ENCODE measurements at regions of chr7 and their contacts with region 1.

Region 1: GRCh38 chr7:132899833-132900232 is 182.1 kb downstream of the CHCHD3 start:
- DNase-seq: no peak
- H3K4me3 ChIP-seq: no peak overlapping the region
- H3K27ac ChIP-seq: no peak overlapping the region
- H3K4me1 ChIP-seq: no peaks in the 10 kb centered on the region
- H3K27me3 ChIP-seq: no peaks in the 10 kb centered on the region
- CTCF ChIP-seq: no peak
- EP300 ChIP-seq: no peak
- POLR2A ChIP-seq: no peak

Region 2: DNA sequence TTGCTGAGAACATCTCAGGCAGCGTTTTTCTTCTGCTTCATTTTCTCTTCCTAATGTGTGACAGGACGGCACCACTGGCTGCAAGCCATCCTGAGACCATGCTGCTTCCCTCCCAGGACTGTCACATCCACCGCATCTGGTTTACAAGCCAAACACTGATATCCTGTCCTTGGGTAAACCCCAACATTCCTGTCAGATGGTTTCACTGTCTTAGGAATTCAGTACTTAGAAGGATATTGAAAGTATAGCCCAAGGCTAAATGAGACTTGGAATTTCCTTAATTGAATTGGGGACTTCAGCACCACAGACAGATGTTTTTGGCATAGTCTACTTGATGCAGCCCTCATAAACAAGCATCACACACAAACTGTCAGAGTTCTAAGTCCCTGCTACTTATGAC is 249.3 kb before region 1 on chr7:
- intact Hi-C with region 1: no loop called
- DNase-seq: no peak
- H3K4me3 ChIP-seq: no peak overlapping the region
- H3K27ac ChIP-seq: no peak overlapping the region
- H3K4me1 ChIP-seq: no peaks in the 10 kb centered on the region
- H3K27me3 ChIP-seq: no peaks in the 10 kb centered on the region
- CTCF ChIP-seq: no peak
- EP300 ChIP-seq: no peak
- POLR2A ChIP-seq: no peak

Region 3: DNA sequence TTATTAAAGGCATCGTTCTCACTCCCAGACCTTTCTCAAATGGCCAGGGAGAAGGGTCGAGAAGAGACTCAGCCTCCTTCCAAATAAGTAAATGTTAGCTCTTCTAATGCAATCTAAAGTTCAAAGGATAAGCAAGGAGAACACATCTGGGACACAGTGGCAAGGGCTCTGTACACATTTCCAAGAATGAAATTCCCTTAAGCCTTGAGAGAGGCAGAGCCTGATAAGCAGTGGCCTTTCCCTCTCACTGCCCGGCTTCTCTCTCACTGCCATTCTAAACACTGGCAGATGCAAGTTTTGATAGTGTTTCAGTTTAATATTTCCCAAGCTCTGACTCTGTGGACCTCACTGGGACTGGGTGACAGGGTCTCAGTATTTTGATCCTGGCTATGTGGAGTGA is 317.9 kb after region 1 on chr7:
- intact Hi-C with region 1: no loop called
- DNase-seq: no peak
- H3K4me3 ChIP-seq: no peak overlapping the region
- H3K27ac ChIP-seq: no peak overlapping the region
- H3K4me1 ChIP-seq: no peaks in the 10 kb centered on the region
- H3K27me3 ChIP-seq: no peaks in the 10 kb centered on the region
- CTCF ChIP-seq: no peak
- EP300 ChIP-seq: no peak
- POLR2A ChIP-seq: no peak

Region 4: GRCh38 chr7:133784486-133785001 is 884.7 kb after region 1 on chr7:
- intact Hi-C with region 1: loop called in 1 of 4 experiments (anchors 5 kb)
- DNase-seq: no peak
- H3K4me3 ChIP-seq: no peak overlapping the region
- H3K27ac ChIP-seq: no peak overlapping the region
- H3K4me1 ChIP-seq: no peaks in the 10 kb centered on the region
- H3K27me3 ChIP-seq: no peaks in the 10 kb centered on the region
- CTCF ChIP-seq: no peak
- EP300 ChIP-seq: no peak
- POLR2A ChIP-seq: no peak

Region 5: GRCh38 chr7:134293002-134293740 is 1393.3 kb after region 1 on chr7:
- intact Hi-C with region 1: loop called in 1 of 4 experiments (anchors 10 kb)
- DNase-seq: no peak
- H3K4me3 ChIP-seq: no peak overlapping the region
- H3K27ac ChIP-seq: no peak overlapping the region
- H3K4me1 ChIP-seq: no peaks in the 10 kb centered on the region
- H3K27me3 ChIP-seq: no peaks in the 10 kb centered on the region
- CTCF ChIP-seq: no peak
- EP300 ChIP-seq: no peak
- POLR2A ChIP-seq: no peak

Measured in ovary (tissue), 10 donors.